GM10248 (cell line): ENCODE measurements at regions of chr12 and their contacts with region 1.

Region 1: GRCh38 chr12:122159882-122160281 is 14.1 kb downstream of the IL31 start:
- DNase-seq: no peak
- CTCF ChIP-seq: peak; percentile 16

Region 2: DNA sequence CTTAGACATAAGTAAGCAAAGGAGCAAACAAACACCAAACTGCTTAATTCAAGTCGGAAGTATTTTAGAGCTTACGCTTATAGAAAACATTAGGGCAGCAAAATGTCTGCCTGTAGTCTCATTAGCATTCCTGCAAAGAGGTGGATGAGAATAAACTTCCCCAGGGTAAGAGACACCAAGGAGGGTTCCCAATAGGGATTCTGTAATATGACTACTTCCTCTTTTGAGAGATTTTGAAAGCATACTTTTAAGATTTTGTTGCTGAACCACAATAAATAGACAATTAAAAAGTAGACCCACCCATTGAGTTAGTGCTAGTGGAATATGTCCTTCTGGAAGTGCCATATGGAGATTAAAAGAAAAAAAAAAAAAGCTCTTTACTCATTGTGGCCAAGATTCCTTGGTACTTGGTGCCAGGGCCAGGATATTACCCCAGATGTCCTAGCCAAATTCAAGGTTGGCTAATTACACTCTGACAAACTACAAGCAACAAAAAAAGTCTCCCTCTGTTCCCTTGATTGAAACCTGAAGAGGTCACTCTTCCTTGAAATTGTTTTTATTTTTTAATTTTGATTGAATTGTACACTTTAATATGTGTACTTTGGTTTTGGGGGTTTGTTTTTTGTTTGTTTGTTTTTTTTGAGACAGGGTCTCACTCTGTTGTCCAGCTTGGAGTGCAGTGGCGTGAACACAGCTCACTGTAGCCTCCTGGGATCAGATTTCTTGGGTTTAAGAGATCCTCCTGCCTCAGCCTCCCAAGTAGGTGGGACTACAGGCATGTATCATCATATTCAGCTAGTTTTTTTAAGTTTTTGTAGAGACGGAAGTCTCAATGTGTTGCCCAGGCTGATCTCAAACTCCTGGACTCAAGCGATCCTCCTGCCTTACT is 253.9 kb after region 1 on chr12:
- CTCF ChIA-PET with region 1: no interaction called
- POLR2A ChIA-PET with region 1: interaction called, 10 read pairs
- DNase-seq: no peak
- CTCF ChIP-seq: no peak